CD14-positive monocyte (primary cell): ENCODE measurements at regions of chr9 and their contacts with region 1.

Region 1: GRCh38 chr9:2132484-2133082 is 117.4 kb downstream of the SMARCA2 start:
- DNase-seq: peak in 1 of 3 donors; percentile 19
- H3K4me3 ChIP-seq: no peak overlapping the region
- H3K4me3 Mint-ChIP-seq: no peak overlapping the region
- H3K27ac ChIP-seq: no peak overlapping the region
- H3K27ac Mint-ChIP-seq: no peak overlapping the region
- H3K4me1 ChIP-seq: peaks cover 6% of the 10 kb centered on the region in 2 donors
- H3K4me1 Mint-ChIP-seq: peaks cover 16% of the 10 kb centered on the region
- H3K27me3 ChIP-seq: no peaks in the 10 kb centered on the region
- H3K27me3 Mint-ChIP-seq: no peaks in the 10 kb centered on the region
- CTCF ChIP-seq: peak; percentile 75

Region 2: DNA sequence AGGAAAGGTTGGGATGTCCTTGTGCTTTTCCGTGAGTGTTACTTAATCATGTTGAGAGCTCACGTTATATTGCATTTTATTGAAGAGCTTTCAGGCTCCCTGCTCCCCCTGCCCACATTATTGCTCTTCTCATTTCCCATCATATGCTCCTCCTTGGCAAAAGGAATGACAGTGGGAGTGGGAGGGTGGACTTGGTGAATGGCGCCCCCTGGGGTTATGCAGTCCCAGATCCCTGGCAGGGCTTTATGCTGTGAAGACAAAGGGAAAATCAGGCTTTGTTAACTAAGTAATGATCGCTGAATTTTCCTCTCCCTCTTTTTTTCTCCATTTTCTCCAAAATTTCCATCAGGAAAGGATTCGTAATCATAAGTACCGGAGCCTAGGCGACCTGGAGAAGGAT is 49.2 kb after region 1 on chr9:
- intact Hi-C with region 1: loop called in 1 of 2 experiments (anchors 10 kb)
- DNase-seq: peak in 2 of 3 donors; percentile 16 to 32
- H3K4me3 ChIP-seq: no peak overlapping the region
- H3K4me3 Mint-ChIP-seq: no peak overlapping the region
- H3K27ac ChIP-seq: no peak overlapping the region
- H3K27ac Mint-ChIP-seq: peak overlapping the region in 1 of 7 donors; percentile 18
- H3K4me1 ChIP-seq: no peaks in the 10 kb centered on the region
- H3K4me1 Mint-ChIP-seq: no peaks in the 10 kb centered on the region
- H3K27me3 ChIP-seq: no peaks in the 10 kb centered on the region
- H3K27me3 Mint-ChIP-seq: no peaks in the 10 kb centered on the region
- CTCF ChIP-seq: peak; percentile 79

Region 3: GRCh38 chr9:2824564-2824963 is 692.0 kb after region 1 on chr9:
- intact Hi-C with region 1: loop called in 1 of 2 experiments (anchors 10 kb)
- DNase-seq: no peak
- H3K4me3 ChIP-seq: no peak overlapping the region
- H3K4me3 Mint-ChIP-seq: no peak overlapping the region
- H3K27ac ChIP-seq: peak overlapping the region in 1 of 2 donors; percentile 27
- H3K27ac Mint-ChIP-seq: no peak overlapping the region
- H3K4me1 ChIP-seq: no peaks in the 10 kb centered on the region
- H3K4me1 Mint-ChIP-seq: no peaks in the 10 kb centered on the region
- H3K27me3 ChIP-seq: no peaks in the 10 kb centered on the region
- H3K27me3 Mint-ChIP-seq: no peaks in the 10 kb centered on the region
- CTCF ChIP-seq: no peak